ENCODE measurements at regions of chr1 and their contacts with region 1.

Region 1: GRCh38 chr1:112358798-112359408 is 37.1 kb upstream of the CTTNBP2NL start:
- DNase-seq: peak; percentile 45
- ATAC-seq: peak; percentile 82
- H3K4me3 ChIP-seq: no peak overlapping the region
- H3K27ac ChIP-seq: peak overlapping the region; percentile 96; the same call in 1 of the 2 replicates
- H3K4me1 ChIP-seq: peaks cover 11% of the 10 kb centered on the region
- H3K27me3 ChIP-seq: peaks cover 26% of the 10 kb centered on the region
- CTCF ChIP-seq: peak; percentile 63
- POLR2A ChIP-seq: no peak
- RAD21 ChIP-seq: peak; percentile 61

Region 2: GRCh38 chr1:112369392-112370285 is 10.7 kb after region 1 on chr1:
- CTCF ChIA-PET with region 1: interaction called, 42 read pairs
- POLR2A ChIA-PET with region 1: no interaction called
- dilution Hi-C with region 1: no loop called
- in situ Hi-C with region 1: no loop called
- intact Hi-C with region 1: no loop called
- DNase-seq: peak; percentile 75
- ATAC-seq: peak; percentile 100
- H3K4me3 ChIP-seq: no peak overlapping the region
- H3K27ac ChIP-seq: no peak overlapping the region
- H3K4me1 ChIP-seq: no peaks in the 10 kb centered on the region
- H3K27me3 ChIP-seq: peaks cover 34% of the 10 kb centered on the region
- CTCF ChIP-seq: peak; percentile 99
- POLR2A ChIP-seq: no peak
- RAD21 ChIP-seq: peak; percentile 85

Region 3: DNA sequence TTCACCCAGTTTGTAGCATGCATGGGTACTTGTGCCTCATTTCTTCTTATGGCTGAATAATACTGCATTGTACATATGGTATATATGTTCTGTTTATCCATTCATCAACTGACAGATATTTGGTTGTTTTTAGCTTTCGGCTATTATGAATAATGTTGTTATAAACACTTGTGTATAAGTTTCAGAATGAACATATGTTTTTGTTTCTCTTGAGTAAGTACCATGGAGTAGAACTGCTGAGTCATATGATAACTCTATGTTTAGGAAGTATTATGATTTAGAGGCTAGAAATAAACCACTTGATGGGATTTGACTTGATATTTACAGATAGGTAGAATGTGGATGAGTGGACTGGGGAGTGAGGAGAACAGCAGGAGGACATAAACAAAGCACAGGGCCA is 198.5 kb after region 1 on chr1:
- CTCF ChIA-PET with region 1: no interaction called
- POLR2A ChIA-PET with region 1: no interaction called
- dilution Hi-C with region 1: no loop called
- in situ Hi-C with region 1: no loop called
- intact Hi-C with region 1: no loop called
- DNase-seq: peak; percentile 62
- ATAC-seq: peak; percentile 79
- H3K4me3 ChIP-seq: no peak overlapping the region
- H3K27ac ChIP-seq: peak overlapping the region; percentile 41; the same call in 1 of the 2 replicates
- H3K4me1 ChIP-seq: no peaks in the 10 kb centered on the region
- H3K27me3 ChIP-seq: no peaks in the 10 kb centered on the region
- CTCF ChIP-seq: no peak
- POLR2A ChIP-seq: no peak
- RAD21 ChIP-seq: no peak

Measured in IMR-90 (cell line).